AG04450 (cell line): ENCODE measurements at regions of chr12 and their contacts with region 1.

Region 1: DNA sequence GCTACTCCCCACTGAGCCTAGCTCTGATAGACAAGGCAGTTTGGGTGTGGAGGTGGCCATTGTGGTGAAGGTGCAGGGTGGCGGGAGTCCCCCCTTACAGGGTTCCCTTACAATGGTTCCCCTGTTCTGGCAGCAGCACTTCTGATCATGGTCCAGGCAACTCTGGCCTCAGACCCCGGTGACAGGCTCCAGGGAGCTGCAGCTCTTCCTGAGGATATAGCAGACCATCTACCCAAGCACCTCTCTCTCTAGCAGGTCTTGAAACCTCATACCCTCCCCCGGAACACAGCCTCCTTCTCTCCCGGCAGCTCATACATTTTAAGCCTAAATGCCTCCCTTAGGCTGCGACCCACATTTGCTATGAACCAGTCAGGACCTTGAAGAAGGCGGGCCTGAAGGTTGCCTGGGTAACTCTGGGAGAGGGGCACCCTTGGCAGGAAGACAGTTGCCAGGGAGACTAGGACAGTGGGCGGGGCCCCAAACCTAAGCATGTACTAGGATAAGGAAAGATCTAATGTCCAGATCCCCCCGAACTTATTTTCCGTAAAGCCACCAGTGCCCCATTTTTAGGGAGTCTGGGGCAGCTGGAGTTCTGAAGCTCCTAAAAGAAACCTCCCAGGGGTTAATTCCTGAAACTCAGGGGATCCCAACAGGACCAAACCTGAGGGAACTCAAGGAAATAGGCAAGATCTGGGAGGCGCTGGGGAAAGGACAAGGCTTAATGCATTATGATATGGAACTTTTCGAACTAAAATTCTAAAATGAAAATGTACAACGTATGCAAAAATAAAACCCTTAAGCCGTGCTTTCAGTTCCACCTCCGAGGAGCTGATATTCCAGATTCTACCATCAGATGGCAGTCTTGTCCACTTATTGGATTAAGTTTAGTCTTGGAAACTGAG is 4.5 kb upstream of the GDF11 start:
- DNase-seq: no peak
- H3K4me3 ChIP-seq: peak overlapping the region; percentile 77
- H3K27ac ChIP-seq: peak overlapping the region; percentile 78
- H3K27me3 ChIP-seq: no peaks in the 10 kb centered on the region
- CTCF ChIP-seq: peak; percentile 74

Region 2: GRCh38 chr12:55296469-55296868 is 441.9 kb before region 1 on chr12 and contains the start of gene OR6C6:
- CTCF ChIA-PET with region 1: no interaction called
- POLR2A ChIA-PET with region 1: no interaction called
- DNase-seq: no peak
- H3K4me3 ChIP-seq: no peak within 1 kb of the TSS
- H3K27ac ChIP-seq: no peak within 1 kb of the TSS
- H3K27me3 ChIP-seq: no peaks in the 10 kb centered on the region
- CTCF ChIP-seq: no peak
- polyA plus RNA-seq, gene OR6C6: not detected in 2 replicates

Region 3: GRCh38 chr12:55755246-55755645 is 16.9 kb after region 1 on chr12:
- CTCF ChIA-PET with region 1: interaction called, 26 read pairs
- POLR2A ChIA-PET with region 1: no interaction called
- DNase-seq: no peak
- H3K4me3 ChIP-seq: no peak overlapping the region
- H3K27ac ChIP-seq: no peak overlapping the region
- H3K27me3 ChIP-seq: no peaks in the 10 kb centered on the region
- CTCF ChIP-seq: no peak

Region 4: GRCh38 chr12:55817346-55818139 is 79.2 kb after region 1 on chr12 and contains the starts of genes ORMDL2 and SARNP:
- CTCF ChIA-PET with region 1: interaction called, 31 read pairs
- POLR2A ChIA-PET with region 1: interaction called, 7 read pairs
- DNase-seq: peak; percentile 99
- H3K4me3 ChIP-seq: peak within 1 kb of the TSS; percentile 86
- H3K27ac ChIP-seq: peak within 1 kb of the TSS; percentile 59
- H3K27me3 ChIP-seq: no peaks in the 10 kb centered on the region
- CTCF ChIP-seq: no peak
- polyA plus RNA-seq, gene ORMDL2: 40.9 and 49.3 TPM in 2 replicates
- polyA plus RNA-seq, gene SARNP: 129 and 178 TPM in 2 replicates

Region 5: GRCh38 chr12:55847603-55848291 is 109.4 kb after region 1 on chr12:
- CTCF ChIA-PET with region 1: interaction called, 12 read pairs
- POLR2A ChIA-PET with region 1: no interaction called
- DNase-seq: peak; percentile 99
- H3K4me3 ChIP-seq: peak overlapping the region; percentile 39
- H3K27ac ChIP-seq: peak overlapping the region; percentile 98
- H3K27me3 ChIP-seq: no peaks in the 10 kb centered on the region
- CTCF ChIP-seq: no peak

Region 6: GRCh38 chr12:55932551-55932910 is 194.2 kb after region 1 on chr12:
- CTCF ChIA-PET with region 1: interaction called, 93 read pairs
- POLR2A ChIA-PET with region 1: interaction called, 5 read pairs
- DNase-seq: no peak
- H3K4me3 ChIP-seq: peak overlapping the region; percentile 89
- H3K27ac ChIP-seq: peak overlapping the region; percentile 47
- H3K27me3 ChIP-seq: no peaks in the 10 kb centered on the region
- CTCF ChIP-seq: no peak

Region 7: GRCh38 chr12:55946553-55946952 is 208.2 kb after region 1 on chr12:
- CTCF ChIA-PET with region 1: interaction called, 93 read pairs
- POLR2A ChIA-PET with region 1: no interaction called
- DNase-seq: no peak
- H3K4me3 ChIP-seq: no peak overlapping the region
- H3K27ac ChIP-seq: no peak overlapping the region
- H3K27me3 ChIP-seq: no peaks in the 10 kb centered on the region
- CTCF ChIP-seq: no peak

Region 8: GRCh38 chr12:55996715-55997534 is 258.6 kb after region 1 on chr12 and contains the start of gene SUOX:
- CTCF ChIA-PET with region 1: interaction called, 28 read pairs
- POLR2A ChIA-PET with region 1: no interaction called
- DNase-seq: peak; percentile 94
- H3K4me3 ChIP-seq: peak within 1 kb of the TSS; percentile 97
- H3K27ac ChIP-seq: peak within 1 kb of the TSS; percentile 52
- H3K27me3 ChIP-seq: no peaks in the 10 kb centered on the region
- CTCF ChIP-seq: no peak
- polyA plus RNA-seq, gene SUOX: 21.0 and 22.8 TPM in 2 replicates